Activated T-helper 2 cell treated with anti-CD3 and anti-CD28 coated beads, Interferon-gamma antibody, Interleukin-2, Interleukin-4, amounts not matched to agents 10 μg/mL and 5 μg/mL and 100 μg/mL, durations not matched to agents 14 hours and 24 hours and 36 hours (primary cell): ENCODE measurements at regions of chr16 and their contacts with region 1.

Region 1: DNA sequence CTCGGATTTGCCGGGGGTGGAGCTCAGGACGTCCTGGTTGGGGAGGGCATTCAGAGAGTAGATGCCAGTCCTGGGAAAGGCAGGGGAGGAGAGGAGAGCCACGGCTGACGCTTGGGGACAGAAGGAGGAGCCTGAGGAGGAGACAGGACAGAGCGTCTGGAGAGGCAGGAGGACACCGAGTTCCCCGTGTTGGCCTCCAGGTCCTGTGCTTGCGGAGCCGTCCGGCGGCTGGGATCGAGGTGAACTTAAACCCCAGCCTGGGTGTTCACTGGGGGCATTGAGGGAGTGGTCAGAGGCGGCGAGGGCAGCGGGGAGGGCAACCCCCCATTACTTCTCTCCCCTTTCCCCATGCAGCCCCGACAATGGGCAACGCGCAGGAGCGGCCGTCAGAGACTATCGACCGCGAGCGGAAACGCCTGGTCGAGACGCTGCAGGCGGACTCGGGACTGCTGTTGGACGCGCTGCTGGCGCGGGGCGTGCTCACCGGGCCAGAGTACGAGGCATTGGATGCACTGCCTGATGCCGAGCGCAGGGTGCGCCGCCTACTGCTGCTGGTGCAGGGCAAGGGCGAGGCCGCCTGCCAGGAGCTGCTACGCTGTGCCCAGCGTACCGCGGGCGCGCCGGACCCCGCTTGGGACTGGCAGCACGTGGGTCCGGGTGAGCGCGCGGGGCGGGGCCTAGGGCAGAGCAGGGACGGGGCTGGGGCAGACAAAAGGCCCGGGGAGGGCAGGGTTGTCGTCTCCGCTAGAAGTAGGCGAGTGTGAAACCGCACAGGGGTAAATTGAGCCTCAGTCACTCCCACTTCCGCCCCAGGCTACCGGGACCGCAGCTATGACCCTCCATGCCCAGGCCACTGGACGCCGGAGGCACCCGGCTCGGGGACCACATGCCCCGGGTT is 3.7 kb downstream of the NOL3 start:
- DNase-seq: peak; percentile 74
- H3K4me3 Mint-ChIP-seq: peak overlapping the region; percentile 83
- H3K27ac Mint-ChIP-seq: peak overlapping the region; percentile 56
- H3K4me1 Mint-ChIP-seq: peaks cover 48% of the 10 kb centered on the region
- H3K27me3 Mint-ChIP-seq: peaks cover 8% of the 10 kb centered on the region

Region 2: DNA sequence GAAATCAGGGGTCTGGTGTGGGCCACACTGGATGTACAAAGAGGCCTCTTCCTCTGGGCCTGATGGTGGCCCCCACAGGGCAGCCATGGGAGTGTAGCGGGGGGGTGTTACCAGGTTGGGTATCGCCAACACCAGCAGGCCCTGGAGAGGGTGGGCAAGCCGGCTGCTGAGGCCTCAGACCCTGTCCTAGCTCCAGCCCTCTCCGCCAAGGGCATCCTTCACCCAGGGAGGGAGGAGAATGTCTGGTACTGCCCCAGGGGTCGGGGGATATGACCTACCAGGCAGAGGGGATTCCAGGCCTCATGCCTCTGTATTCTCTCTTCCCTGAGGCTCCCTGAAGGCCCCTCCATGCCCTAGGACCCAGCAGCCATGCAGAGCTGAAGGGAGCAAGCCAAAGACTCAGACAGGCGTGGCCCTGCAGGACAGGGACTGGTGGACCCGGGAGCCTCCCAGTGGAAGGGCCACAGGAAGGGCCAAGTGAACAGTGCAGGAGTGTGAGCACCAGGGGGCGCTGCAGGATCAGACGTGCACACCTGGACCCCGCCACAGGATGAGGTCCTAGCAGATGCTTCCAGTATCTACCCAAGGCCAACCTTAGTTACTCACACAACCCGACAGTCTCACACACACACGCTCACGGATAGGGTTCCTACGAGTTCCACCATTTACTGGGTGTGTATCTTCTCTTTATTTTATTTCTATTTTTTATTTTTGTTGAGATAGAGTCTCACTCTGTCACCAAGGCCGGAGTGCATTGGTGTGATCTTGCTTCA is 196.5 kb before region 1 on chr16:
- intact Hi-C with region 1: loop called (anchors 5 kb)
- DNase-seq: peak; percentile 83
- H3K4me3 Mint-ChIP-seq: no peak overlapping the region
- H3K27ac Mint-ChIP-seq: peak overlapping the region; percentile 68
- H3K4me1 Mint-ChIP-seq: peaks cover 50% of the 10 kb centered on the region
- H3K27me3 Mint-ChIP-seq: no peaks in the 10 kb centered on the region

Region 3: DNA sequence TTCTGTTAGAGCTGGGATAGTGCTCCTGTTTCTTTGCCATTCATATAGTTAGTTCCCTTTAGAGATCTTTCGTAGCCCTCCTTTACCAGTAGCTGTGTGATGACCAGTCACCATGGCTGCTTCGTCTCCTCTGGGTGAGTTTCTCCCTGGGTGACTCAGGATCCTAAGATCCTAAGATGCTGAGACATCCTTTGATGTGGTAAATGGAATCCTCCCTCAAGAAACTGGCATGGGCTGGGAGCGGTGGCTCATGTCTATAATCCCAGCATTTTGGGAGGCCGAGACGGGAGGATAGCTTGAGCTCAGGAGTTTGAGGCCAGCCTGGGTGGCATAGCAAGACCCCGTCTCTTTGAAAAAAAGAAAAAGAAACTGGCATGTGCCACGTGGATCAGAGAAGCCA is 58.4 kb before region 1 on chr16:
- intact Hi-C with region 1: no loop called
- DNase-seq: no peak
- H3K4me3 Mint-ChIP-seq: no peak overlapping the region
- H3K27ac Mint-ChIP-seq: no peak overlapping the region
- H3K4me1 Mint-ChIP-seq: peaks cover 14% of the 10 kb centered on the region
- H3K27me3 Mint-ChIP-seq: no peaks in the 10 kb centered on the region